Mammary epithelial cell (primary cell): ENCODE measurements at regions of chr19 and their contacts with region 1.

Region 1: DNA sequence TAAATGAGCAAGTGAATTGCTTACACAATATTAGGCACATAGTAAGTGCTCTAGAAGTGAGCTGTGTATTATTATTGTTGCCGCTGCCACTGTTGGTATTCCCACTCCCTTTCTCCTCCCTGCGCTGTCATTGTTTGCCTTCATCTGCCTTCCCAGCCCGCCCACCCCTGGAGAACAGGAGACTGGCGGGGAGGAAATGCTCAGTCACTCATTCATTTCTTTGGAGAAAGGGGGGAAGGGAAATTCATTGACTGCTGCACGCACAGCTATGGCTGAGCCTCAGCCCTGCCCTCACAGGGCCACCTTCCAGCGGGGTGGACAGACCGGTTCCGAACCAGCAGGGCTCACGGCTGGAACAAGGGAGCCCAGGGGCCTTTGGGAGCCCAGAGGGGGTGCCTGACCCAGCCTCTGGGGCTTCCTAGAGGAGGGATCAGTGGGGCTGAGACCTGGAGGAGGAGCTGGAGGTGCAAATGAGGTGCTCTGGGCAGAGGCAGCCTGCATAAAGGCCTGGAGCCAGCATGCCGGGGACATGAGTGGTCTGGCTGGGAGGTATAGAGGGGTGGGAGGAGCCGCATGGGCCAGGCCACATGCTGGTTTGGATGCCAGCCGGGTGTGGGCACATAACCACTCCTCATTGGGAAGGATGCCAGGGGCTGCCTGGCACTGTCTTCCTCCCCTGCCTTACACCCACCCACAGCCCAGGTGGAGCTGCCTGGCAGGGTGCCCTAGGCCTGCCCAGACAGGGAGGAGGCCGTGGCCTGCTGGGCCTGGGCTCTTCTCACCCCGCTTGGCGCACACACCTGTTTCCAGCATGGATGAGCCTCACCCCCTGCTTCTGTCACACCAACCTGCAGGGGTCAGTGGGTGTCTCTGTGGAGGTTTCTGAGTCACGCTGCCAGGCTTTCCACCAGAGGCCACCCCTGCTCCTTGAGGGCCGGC is 26.8 kb downstream of the PPP5C start:
- DNase-seq: peak; percentile 99
- H3K4me3 ChIP-seq: peak overlapping the region in 2 of 3 experiments; percentile 29 to 35
- H3K27ac ChIP-seq: peak overlapping the region; percentile 91
- H3K4me1 ChIP-seq: peaks cover 38% of the 10 kb centered on the region
- H3K27me3 ChIP-seq: no peaks in the 10 kb centered on the region
- CTCF ChIP-seq: peak in 1 of 2 donors; percentile 34

Region 2: GRCh38 chr19:46155226-46155625 is 218.5 kb before region 1 on chr19:
- CTCF ChIA-PET with region 1: no interaction called
- dilution Hi-C with region 1: no loop called
- in situ Hi-C with region 1: no loop called
- intact Hi-C with region 1: no loop called
- DNase-seq: no peak
- H3K4me3 ChIP-seq: no peak overlapping the region
- H3K27ac ChIP-seq: no peak overlapping the region
- H3K4me1 ChIP-seq: peaks cover 4% of the 10 kb centered on the region
- H3K27me3 ChIP-seq: no peaks in the 10 kb centered on the region
- CTCF ChIP-seq: no peak

Region 3: DNA sequence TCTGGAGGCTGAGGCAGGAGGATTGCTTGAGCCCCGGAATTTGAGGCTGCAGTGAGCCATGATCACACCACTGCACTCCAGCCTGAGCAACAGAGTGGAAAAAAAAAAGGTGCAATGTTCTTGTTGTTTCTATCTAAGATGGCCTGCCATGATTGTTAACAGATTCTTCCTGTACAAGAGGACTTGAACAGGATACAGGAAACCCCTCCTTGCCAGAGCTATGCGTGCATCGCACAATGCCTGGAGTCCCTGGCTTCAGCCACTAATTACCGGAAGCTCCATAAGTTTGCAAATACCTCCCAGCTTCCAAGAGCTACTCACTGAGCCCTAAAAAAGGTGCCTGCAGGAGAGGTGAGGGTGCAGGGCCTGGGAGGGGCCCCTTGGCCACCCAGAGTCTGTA is 89.9 kb before region 1 on chr19:
- CTCF ChIA-PET with region 1: no interaction called
- dilution Hi-C with region 1: loop called (anchors 5 kb)
- in situ Hi-C with region 1: loop called in 1 of 2 experiments (anchors 10 kb)
- intact Hi-C with region 1: loop called (anchors 5 kb)
- DNase-seq: no peak
- H3K4me3 ChIP-seq: no peak overlapping the region
- H3K27ac ChIP-seq: no peak overlapping the region
- H3K4me1 ChIP-seq: peaks cover under 1% of the 10 kb centered on the region
- H3K27me3 ChIP-seq: no peaks in the 10 kb centered on the region
- CTCF ChIP-seq: no peak

Region 4: GRCh38 chr19:46288896-46289588 is 84.6 kb before region 1 on chr19:
- CTCF ChIA-PET with region 1: no interaction called
- dilution Hi-C with region 1: loop called (anchors 5 kb)
- in situ Hi-C with region 1: loop called in 1 of 2 experiments (anchors 10 kb)
- intact Hi-C with region 1: loop called (anchors 5 kb)
- DNase-seq: peak; percentile 94
- H3K4me3 ChIP-seq: no peak overlapping the region
- H3K27ac ChIP-seq: peak overlapping the region; percentile 45
- H3K4me1 ChIP-seq: peaks cover 10% of the 10 kb centered on the region
- H3K27me3 ChIP-seq: no peaks in the 10 kb centered on the region
- CTCF ChIP-seq: no peak

Region 5: GRCh38 chr19:46614114-46614722 is 240.5 kb after region 1 on chr19:
- CTCF ChIA-PET with region 1: interaction called, 10 read pairs
- dilution Hi-C with region 1: no loop called
- in situ Hi-C with region 1: no loop called
- intact Hi-C with region 1: no loop called
- DNase-seq: peak; percentile 47
- H3K4me3 ChIP-seq: no peak overlapping the region
- H3K27ac ChIP-seq: no peak overlapping the region
- H3K4me1 ChIP-seq: no peaks in the 10 kb centered on the region
- H3K27me3 ChIP-seq: no peaks in the 10 kb centered on the region
- CTCF ChIP-seq: peak; percentile 63 to 86